Ovary (tissue), 10 donors: ENCODE measurements at regions of chr19 and their contacts with region 1.

Region 1: DNA sequence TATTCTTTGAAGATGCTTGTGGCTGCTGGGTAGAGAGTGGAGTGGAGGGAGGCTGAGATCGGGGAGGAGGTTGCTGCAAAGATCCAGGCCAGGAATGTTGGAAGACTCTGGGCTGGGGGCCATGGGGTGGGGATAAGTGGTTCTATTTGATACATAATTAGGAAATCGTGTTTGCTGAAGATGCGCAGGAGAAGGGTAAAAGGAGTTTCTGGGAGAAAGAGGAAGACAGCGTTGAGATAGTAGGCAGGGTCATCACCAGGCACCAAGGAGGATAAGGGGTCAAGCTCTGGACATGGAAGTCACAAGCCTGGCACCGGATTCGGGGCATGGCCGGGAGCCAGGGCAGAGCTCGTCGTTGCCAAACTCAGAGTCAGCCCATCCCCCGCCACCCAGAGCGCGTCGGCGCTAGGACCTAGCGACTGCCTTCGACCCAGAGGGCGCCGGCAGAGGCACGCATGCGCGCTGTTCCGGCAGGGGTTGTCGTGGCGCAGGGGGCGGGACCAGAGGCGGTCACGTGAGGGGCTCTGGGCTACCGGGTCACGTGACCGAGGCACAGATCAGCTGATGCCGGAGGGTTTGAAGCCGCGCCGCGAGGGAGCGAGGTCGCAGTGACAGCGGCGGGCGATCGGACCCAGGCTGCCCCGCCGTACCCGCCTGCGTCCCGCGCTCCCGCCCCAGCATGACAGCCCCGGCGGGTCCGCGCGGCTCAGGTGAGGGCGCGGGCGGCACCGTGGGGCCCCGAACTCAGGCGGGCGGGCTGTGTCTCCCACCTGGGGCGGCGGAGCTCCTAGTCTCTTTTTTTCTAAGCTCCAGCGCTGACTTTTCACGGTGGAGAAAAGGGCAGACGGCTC is at the start of gene MCOLN1:
- DNase-seq: peak; percentile 99 to 100 (median 100)
- H3K4me3 ChIP-seq: peak within 1 kb of the TSS; percentile 63
- H3K27ac ChIP-seq: peak within 1 kb of the TSS in 1 of 2 donors; percentile 51
- H3K4me1 ChIP-seq: peaks cover 12% of the 10 kb centered on the region
- H3K27me3 ChIP-seq: no peaks in the 10 kb centered on the region
- CTCF ChIP-seq: peak in 1 of 3 donors; percentile 29
- EP300 ChIP-seq: no peak
- POLR2A ChIP-seq: peak; percentile 38
- total RNA-seq, gene MCOLN1: 9.2 to 18.9 (median 13.6) TPM

Region 2: GRCh38 chr19:6828698-6829562 is 693.4 kb before region 1 on chr19:
- intact Hi-C with region 1: no loop called
- DNase-seq: no peak
- H3K4me3 ChIP-seq: no peak overlapping the region
- H3K27ac ChIP-seq: no peak overlapping the region
- H3K4me1 ChIP-seq: no peaks in the 10 kb centered on the region
- H3K27me3 ChIP-seq: no peaks in the 10 kb centered on the region
- CTCF ChIP-seq: no peak
- EP300 ChIP-seq: no peak
- POLR2A ChIP-seq: no peak

Region 3: GRCh38 chr19:7565332-7565731 is 43.0 kb after region 1 on chr19:
- intact Hi-C with region 1: loop called in 1 of 4 experiments (anchors 1 kb)
- DNase-seq: no peak
- H3K4me3 ChIP-seq: no peak overlapping the region
- H3K27ac ChIP-seq: no peak overlapping the region
- H3K4me1 ChIP-seq: no peaks in the 10 kb centered on the region
- H3K27me3 ChIP-seq: no peaks in the 10 kb centered on the region
- CTCF ChIP-seq: no peak
- EP300 ChIP-seq: no peak
- POLR2A ChIP-seq: no peak

Region 4: GRCh38 chr19:7748770-7749209 is 226.5 kb after region 1 on chr19:
- intact Hi-C with region 1: no loop called
- DNase-seq: no peak
- H3K4me3 ChIP-seq: no peak overlapping the region
- H3K27ac ChIP-seq: no peak overlapping the region
- H3K4me1 ChIP-seq: no peaks in the 10 kb centered on the region
- H3K27me3 ChIP-seq: no peaks in the 10 kb centered on the region
- CTCF ChIP-seq: no peak
- EP300 ChIP-seq: no peak
- POLR2A ChIP-seq: no peak